Sciatic nerve (tissue), 2 donors: ENCODE measurements at regions of chr5 and their contacts with region 1.

Region 1: DNA sequence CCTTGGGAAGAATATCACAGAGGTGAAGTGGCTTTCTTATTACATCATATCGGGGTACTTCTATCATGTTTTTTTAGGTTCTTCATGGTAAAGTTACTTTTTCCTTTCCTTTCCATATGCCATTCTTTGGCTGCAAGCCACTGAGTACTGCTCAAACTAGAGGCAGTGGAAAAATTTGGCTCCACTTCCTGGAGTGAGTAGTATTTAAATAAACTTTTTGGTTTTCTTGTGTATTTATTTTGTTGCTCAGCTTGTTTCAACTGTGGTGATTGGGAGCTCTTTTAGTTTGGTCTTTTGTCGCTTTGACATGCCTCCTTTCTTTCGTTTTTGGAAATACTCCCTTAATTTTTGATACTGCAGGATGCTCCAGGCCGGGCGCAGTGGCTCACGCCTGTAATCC is 69.8 kb downstream of the WDR70 start:
- DNase-seq: no peak
- ATAC-seq: no peak

Region 2: DNA sequence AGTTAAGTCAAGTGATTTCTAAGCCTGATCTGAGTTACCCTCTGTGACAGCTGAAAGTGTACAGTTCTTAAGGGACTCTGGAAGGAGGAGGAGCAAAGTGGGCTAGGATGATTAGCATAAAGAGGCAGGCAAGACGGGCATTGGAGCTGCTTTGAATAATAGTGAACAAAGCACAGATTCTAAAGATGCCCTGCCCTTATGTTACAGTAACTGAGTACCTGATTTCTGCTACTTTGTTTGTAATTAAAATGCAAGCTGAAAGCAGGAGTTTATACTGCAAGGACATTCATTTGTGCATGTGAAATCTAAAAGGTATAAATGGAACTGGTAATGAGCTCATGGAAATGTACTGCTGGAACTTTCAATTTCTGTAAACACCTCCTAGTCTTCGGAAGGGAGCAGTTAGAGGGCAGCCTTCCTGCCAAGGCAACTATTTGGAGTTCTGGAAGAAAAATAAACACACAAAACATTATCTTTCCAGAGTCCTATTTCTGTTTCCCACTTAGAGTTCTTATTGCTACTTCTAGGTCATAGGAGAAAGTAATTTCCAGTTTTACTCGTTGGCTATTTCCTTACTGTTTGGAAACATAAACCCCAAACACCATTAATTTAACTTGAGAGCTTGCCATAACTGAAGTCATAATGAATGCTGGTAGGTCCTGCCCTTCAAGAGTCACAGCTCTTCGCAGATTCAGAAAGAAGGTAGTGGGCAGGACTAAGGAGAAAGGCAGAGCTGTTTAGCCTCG is 1146.9 kb before region 1 on chr5 and contains the start of gene RANBP3L:
- intact Hi-C with region 1: loop called (anchors 5 kb)
- DNase-seq: no peak
- ATAC-seq: peak; percentile 80
- total RNA-seq, gene RANBP3L: 0.40 TPM

Region 3: DNA sequence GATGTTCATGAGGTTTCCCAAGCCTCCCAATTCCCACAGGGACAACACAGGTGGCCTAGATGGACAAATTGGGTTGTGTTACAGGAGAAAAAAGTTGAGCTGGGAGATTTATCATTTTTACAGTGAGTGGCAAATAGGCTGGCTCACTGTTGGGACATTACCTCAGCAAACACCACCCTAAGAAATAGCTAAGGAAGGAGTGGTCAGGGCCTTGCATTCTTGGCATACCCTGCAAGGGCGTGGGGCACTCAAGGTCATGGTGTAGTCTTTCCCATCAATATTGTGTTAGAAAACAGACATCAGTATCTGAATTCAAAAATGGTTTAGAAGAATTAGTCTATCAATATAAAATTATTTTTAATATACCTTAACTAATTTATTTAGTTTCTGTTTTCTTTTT is 176.4 kb before region 1 on chr5:
- intact Hi-C with region 1: no loop called
- DNase-seq: no peak
- ATAC-seq: peak; percentile 83